Ascending aorta (tissue), 2 donors: ENCODE measurements at regions of chr11 and their contacts with region 1.

Region 1: DNA sequence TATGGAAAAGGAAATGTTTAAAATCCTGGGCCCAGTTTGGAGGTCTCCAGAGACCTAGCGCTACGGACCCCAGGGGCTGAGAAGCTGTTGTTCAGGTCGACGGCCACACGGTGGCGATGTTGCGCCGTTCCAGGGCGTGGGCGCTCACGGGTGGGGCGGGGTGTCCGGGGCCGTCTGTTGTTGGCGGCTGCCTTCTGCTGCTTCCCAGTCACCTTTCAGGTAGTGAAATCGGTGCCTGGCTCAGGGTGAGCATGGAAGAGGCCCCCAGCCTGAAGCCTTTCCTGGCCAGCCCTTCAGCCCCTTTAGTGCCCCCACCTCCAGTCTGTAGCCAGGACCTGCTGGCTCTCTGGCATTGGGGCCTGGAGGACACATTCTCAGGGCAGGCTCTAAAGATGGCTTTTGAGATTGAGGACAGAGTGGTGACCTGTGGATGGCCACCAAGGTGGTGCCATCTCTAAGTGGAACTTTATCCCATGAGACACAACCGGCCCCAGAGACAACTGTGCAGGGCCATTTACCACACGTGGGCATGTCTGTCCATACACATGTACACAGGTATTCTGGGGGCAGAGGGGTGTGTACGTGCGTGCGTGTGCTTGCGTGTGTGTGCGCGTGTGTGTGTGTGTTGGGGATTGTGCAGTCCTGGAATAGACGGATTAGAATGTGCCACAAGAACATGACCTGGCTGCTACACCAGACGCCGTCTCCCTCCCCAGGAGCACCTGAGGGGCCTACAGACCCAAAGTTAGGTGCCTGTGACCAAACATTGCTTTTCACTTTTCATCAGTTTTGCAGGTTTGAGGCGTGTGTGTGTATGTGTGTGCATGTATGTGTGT is 53.8 kb downstream of the ST14 start:
- DNase-seq: peak in 1 of 2 donors; percentile 67
- H3K4me3 ChIP-seq: no peak overlapping the region
- H3K27ac ChIP-seq: no peak overlapping the region
- H3K4me1 ChIP-seq: no peaks in the 10 kb centered on the region
- H3K27me3 ChIP-seq: no peaks in the 10 kb centered on the region
- CTCF ChIP-seq: peak; percentile 81 to 98 (median 97)

Region 2: DNA sequence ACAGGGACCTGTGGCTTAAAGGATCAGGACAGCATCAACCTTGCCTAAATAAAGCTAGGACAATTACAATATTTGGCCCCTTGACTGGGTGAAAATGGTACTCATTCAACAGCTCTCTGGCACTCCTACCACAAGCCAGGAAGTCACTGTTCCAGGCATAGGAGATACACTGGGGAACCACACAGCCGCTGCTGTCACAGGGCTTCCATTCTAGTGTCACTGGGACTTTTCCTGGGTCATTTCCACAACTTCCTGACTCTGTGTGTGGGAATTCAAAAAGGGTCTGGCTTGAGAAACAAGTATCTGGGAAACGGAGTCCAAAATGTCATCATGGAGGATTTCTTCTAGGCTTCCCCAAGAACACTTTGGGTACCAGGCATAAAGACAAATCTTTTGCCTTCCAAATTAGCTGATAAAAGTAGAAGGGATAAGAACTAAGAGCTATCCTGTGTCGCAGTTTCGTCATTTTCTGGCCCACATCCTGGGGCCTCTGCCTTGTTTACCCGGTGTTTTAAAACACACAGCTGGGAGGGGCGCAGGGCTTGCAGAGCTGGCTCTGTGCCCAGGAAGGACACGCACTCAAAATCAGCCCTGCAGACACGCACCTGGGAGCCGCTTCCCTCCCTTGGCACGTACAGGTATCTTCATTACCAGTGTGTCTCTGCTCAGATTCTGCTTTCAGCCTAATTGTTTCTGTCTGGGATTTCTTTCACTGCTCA is 359.7 kb before region 1 on chr11:
- intact Hi-C with region 1: no loop called
- DNase-seq: no peak
- H3K4me3 ChIP-seq: no peak overlapping the region
- H3K27ac ChIP-seq: no peak overlapping the region
- H3K4me1 ChIP-seq: no peaks in the 10 kb centered on the region
- H3K27me3 ChIP-seq: no peaks in the 10 kb centered on the region
- CTCF ChIP-seq: no peak

Region 3: DNA sequence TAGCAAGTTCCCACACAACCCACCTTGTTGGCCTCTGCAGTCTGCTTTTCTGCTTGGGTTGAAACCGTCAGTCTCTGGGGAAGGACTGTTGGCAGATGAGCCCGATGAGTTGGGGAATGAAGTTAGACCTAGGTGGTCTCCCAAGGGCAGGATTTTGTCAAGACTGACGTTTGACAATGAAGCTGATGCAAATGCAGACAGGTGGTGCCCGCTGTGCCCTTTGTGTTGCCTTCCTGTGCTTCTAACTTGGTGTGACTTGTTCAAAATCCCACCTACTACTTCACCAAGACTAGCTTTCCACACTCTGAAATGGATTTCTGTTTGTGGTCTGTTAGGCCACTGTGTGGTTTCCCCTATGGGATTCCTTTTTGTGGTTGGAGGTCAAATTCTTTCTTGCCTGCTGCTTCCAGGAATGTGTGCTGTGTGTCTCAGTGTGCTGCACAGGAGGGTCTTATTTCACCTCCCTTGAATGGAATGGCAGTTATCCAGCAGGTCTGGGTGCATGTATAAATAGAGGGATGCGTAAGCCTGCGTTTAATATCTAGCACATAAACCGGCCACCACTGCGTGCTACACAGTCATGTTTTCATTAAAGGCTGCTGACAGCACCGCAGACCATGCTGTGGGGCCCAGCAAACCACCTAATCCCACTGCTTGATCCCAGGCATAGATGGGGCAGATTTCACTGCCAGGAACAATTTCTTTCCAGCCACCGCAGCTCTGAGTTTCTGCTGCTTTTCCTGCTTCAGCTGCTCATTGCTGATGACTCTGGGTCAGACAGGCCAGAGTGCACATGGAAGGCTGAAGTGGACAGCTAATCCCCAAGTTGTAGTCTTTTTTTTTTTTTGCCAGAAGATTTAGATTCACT is 170.2 kb after region 1 on chr11:
- intact Hi-C with region 1: loop called (anchors 10 kb)
- DNase-seq: no peak
- H3K4me3 ChIP-seq: no peak overlapping the region
- H3K27ac ChIP-seq: no peak overlapping the region
- H3K4me1 ChIP-seq: no peaks in the 10 kb centered on the region
- H3K27me3 ChIP-seq: no peaks in the 10 kb centered on the region
- CTCF ChIP-seq: no peak

Region 4: GRCh38 chr11:130427581-130428315 is 214.4 kb after region 1 on chr11:
- intact Hi-C with region 1: loop called (anchors 2 kb)
- DNase-seq: no peak
- H3K4me3 ChIP-seq: peak overlapping the region; percentile 51 to 83
- H3K27ac ChIP-seq: peak overlapping the region in 1 of 2 donors; percentile 64
- H3K4me1 ChIP-seq: peaks cover 3 to 17% of the 10 kb centered on the region in 2 donors
- H3K27me3 ChIP-seq: no peaks in the 10 kb centered on the region
- CTCF ChIP-seq: peak in 1 of 3 experiments; percentile 45